Activated CD4-positive, alpha-beta T cell treated with anti-CD3 and anti-CD28 coated beads for 36 hours (primary cell): ENCODE measurements at regions of chr9 and their contacts with region 1.

Region 1: GRCh38 chr9:91361291-91362050 is at the start of gene AUH:
- DNase-seq: peak; percentile 93
- ATAC-seq: peak; percentile 74
- H3K4me3 Mint-ChIP-seq: peak within 1 kb of the TSS; percentile 87
- H3K27ac Mint-ChIP-seq: peak within 1 kb of the TSS; percentile 86
- H3K4me1 Mint-ChIP-seq: peaks cover 53% of the 10 kb centered on the region
- H3K27me3 Mint-ChIP-seq: no peaks in the 10 kb centered on the region
- total RNA-seq, gene AUH: 30.4 to 30.8 TPM

Region 2: GRCh38 chr9:91101611-91102168 is 259.8 kb before region 1 on chr9:
- CTCF ChIA-PET with region 1: interaction called, 4 read pairs
- POLR2A ChIA-PET with region 1: interaction called, 11 read pairs
- intact Hi-C with region 1: no loop called
- DNase-seq: peak; percentile 96
- ATAC-seq: peak; percentile 82
- H3K4me3 Mint-ChIP-seq: peak overlapping the region; percentile 81
- H3K27ac Mint-ChIP-seq: peak overlapping the region; percentile 97
- H3K4me1 Mint-ChIP-seq: peaks cover 70% of the 10 kb centered on the region
- H3K27me3 Mint-ChIP-seq: no peaks in the 10 kb centered on the region

Region 3: DNA sequence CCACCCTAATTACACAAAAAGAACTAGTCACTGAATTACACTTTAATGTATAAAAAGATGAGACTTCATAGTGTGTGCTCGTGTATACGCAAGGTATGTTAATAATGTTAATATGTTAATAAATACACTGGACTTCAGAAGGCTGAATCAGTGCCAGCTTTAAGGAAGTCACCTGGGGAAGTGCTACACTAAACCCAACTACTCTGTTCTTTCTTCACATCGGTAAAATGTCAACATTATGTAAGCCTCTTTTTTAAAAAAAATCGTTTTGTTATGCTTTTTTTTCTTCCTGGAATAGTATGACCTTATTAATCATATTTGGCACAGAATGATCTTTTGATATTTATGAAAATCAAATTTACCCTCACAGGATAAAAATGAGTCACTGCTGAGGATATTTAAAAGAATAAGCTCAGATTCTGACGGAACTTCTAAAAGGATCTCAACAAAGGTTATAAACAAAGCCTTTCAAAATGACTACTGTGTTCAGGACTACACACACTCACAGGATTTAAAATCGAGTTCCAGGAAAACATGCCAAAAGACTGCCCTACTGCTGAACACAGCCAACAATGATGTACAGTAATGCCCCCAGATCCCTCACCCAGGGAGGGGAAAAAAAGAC is 75.6 kb before region 1 on chr9:
- CTCF ChIA-PET with region 1: no interaction called
- POLR2A ChIA-PET with region 1: no interaction called
- intact Hi-C with region 1: no loop called
- DNase-seq: no peak
- ATAC-seq: peak; percentile 73
- H3K4me3 Mint-ChIP-seq: no peak overlapping the region
- H3K27ac Mint-ChIP-seq: peak overlapping the region; percentile 72
- H3K4me1 Mint-ChIP-seq: peaks cover 14% of the 10 kb centered on the region
- H3K27me3 Mint-ChIP-seq: no peaks in the 10 kb centered on the region

Region 4: GRCh38 chr9:91341239-91341746 is 20.2 kb before region 1 on chr9:
- CTCF ChIA-PET with region 1: interaction called, 3 read pairs
- POLR2A ChIA-PET with region 1: interaction called, 22 read pairs
- intact Hi-C with region 1: loop called in 1 of 2 experiments (anchors 2 kb)
- DNase-seq: peak; percentile 22
- ATAC-seq: peak; percentile 71
- H3K4me3 Mint-ChIP-seq: no peak overlapping the region
- H3K27ac Mint-ChIP-seq: peak overlapping the region; percentile 55
- H3K4me1 Mint-ChIP-seq: peaks cover 34% of the 10 kb centered on the region
- H3K27me3 Mint-ChIP-seq: no peaks in the 10 kb centered on the region

Region 5: GRCh38 chr9:91395553-91396471 is 34.3 kb after region 1 on chr9:
- CTCF ChIA-PET with region 1: interaction called, 3 read pairs
- POLR2A ChIA-PET with region 1: interaction called, 9 read pairs
- intact Hi-C with region 1: loop called (anchors 1 kb)
- DNase-seq: peak; percentile 42
- ATAC-seq: peak; percentile 87
- H3K4me3 Mint-ChIP-seq: peak overlapping the region; percentile 4
- H3K27ac Mint-ChIP-seq: peak overlapping the region; percentile 80
- H3K4me1 Mint-ChIP-seq: peaks cover 18% of the 10 kb centered on the region
- H3K27me3 Mint-ChIP-seq: peaks cover 10% of the 10 kb centered on the region

Region 6: GRCh38 chr9:91711755-91712601 is 350.5 kb after region 1 on chr9:
- CTCF ChIA-PET with region 1: no interaction called
- POLR2A ChIA-PET with region 1: no interaction called
- intact Hi-C with region 1: loop called in 1 of 2 experiments (anchors 5 kb)
- DNase-seq: peak; percentile 88
- ATAC-seq: peak; percentile 97
- H3K4me3 Mint-ChIP-seq: no peak overlapping the region
- H3K27ac Mint-ChIP-seq: peak overlapping the region; percentile 26
- H3K4me1 Mint-ChIP-seq: no peaks in the 10 kb centered on the region
- H3K27me3 Mint-ChIP-seq: peaks cover 24% of the 10 kb centered on the region